Activated naive CD4-positive, alpha-beta T cell treated with anti-CD3 and anti-CD28 coated beads, Interleukin-2, amount 10 ng/mL, durations not matched to agents 7 days and 5 days (primary cell): ENCODE measurements at regions of chrX and their contacts with region 1.

Region 1: DNA sequence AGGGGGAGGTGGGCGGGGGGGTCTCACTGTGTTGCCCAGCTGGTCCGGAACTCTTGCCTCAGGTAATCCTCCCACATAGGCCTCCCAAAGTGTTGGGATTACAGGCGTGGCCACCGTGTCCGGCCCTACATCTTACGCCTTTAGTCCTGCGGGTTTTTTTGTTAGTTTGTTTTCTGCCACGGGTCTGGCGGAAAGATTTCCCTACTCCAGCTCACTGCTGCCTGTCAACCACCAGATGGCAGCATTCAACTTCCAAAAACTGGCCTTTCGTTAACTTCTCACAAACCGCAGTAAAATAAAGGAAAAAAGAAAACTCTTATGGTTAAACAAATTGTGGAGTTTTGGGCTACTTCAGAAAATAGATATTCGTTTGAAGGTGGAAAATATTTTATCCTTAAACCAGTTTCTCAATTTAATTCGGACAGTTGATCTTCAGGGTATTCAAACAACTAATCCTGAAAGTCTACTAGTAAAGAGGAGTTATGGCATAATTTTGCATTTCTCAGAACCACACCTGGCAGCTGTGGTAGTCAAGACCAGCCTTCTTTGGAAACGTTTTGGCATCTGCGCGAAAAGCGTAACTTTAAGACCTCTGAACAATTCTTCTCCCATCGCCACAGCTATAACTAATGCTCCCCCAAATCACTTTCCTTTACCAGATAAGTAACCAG is 41.1 kb downstream of the LUZP4 start:
- DNase-seq: peak; percentile 20
- H3K4me3 Mint-ChIP-seq: no peak overlapping the region
- H3K27ac Mint-ChIP-seq: no peak overlapping the region
- H3K4me1 Mint-ChIP-seq: no peaks in the 10 kb centered on the region
- H3K27me3 Mint-ChIP-seq: no peaks in the 10 kb centered on the region

Region 2: DNA sequence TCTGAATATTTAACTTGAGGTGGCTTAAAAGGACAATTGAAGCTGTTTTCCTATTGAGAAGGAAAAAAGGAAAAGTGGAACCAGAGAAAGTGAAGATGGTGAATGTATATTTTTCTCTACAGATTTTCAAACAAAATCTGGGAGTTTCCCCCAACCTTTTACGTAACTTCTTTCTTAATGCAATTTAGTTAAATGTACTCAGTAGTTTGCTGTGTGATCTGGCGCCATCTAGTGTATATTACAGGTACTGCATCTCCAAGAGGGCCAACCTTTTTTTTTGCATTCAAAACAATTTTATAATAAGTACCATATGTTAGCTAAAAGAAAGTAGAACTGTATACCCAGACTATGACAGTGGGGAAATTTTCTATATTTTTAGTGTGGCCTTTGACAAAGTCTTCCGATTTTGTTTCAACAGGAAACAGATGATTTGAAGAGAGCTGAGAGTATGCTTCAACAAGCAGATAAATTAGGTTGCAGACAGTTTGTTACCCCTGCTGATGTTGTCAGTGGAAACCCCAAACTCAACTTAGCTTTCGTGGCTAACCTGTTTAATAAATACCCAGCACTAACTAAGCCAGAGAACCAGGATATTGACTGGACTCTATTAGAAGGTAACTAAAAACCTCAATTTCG is 312.4 kb after region 1 on chrX:
- CTCF ChIA-PET with region 1: interaction called, 14 read pairs
- DNase-seq: peak; percentile 21
- H3K4me3 Mint-ChIP-seq: no peak overlapping the region
- H3K27ac Mint-ChIP-seq: no peak overlapping the region
- H3K4me1 Mint-ChIP-seq: no peaks in the 10 kb centered on the region
- H3K27me3 Mint-ChIP-seq: no peaks in the 10 kb centered on the region